PC-9 (cell line): ENCODE measurements at regions of chr10 and their contacts with region 1.

Region 1: GRCh38 chr10:73096449-73097304 is at the start of gene P4HA1:
- DNase-seq: peak; percentile 90 to 98
- H3K4me3 ChIP-seq: peak within 1 kb of the TSS; percentile 93
- H3K27ac ChIP-seq: peak within 1 kb of the TSS; percentile 65
- H3K4me1 ChIP-seq: peaks cover 18% of the 10 kb centered on the region
- H3K27me3 ChIP-seq: no peaks in the 10 kb centered on the region
- CTCF ChIP-seq: peak; percentile 68
- total RNA-seq, gene P4HA1: 21.0 and 25.5 TPM in 2 replicates

Region 2: GRCh38 chr10:72026278-72027111 is 1070.2 kb before region 1 on chr10:
- CTCF ChIA-PET with region 1: no interaction called
- POLR2A ChIA-PET with region 1: interaction called, 15 read pairs
- intact Hi-C with region 1: no loop called
- DNase-seq: peak in 1 of 2 experiments; percentile 26
- H3K4me3 ChIP-seq: no peak overlapping the region
- H3K27ac ChIP-seq: no peak overlapping the region
- H3K4me1 ChIP-seq: peaks cover 20% of the 10 kb centered on the region
- H3K27me3 ChIP-seq: no peaks in the 10 kb centered on the region
- CTCF ChIP-seq: no peak

Region 3: DNA sequence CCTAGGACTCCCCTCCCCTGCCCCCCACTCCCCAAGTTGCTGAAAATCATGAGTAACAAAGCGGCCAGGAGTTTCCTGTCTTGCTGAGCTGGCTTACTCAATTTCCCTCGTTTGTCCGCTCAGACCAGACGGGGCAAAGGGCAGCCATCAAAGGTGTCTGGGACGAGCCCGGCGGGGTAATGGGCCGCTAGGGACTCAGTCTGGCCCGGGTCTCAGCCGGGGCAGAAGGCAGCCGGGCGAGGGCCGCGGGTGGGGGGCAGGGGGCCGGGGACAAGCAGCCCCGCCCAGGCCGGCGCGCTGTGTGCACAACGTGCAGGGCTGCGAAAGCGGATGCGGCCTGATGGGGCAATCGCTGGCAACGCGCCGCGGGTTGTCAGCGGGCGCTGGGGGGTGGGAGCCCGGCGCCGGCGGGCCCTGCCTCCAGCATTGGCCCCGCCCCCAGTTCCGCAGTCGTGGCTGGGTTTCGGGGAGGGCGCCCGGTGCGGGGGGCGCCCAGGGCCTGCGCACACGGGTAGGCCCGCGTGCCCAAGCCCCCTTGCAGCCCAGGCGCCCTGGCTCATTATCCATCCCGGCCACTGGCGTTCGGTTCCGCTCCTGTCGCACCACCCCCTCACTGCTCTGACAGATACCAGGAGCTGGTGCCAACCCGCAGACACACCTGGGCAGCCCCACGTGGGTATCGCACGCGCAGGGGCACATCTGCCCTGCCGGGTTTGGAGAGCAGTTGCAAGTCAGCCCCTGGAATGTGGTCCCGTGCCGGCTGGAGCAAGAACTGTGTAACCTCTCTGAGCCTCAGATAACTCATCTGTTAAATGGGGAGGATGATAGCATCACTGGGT is 777.0 kb before region 1 on chr10:
- CTCF ChIA-PET with region 1: no interaction called
- POLR2A ChIA-PET with region 1: interaction called, 10 read pairs
- intact Hi-C with region 1: no loop called
- DNase-seq: peak; percentile 91 to 95
- H3K4me3 ChIP-seq: peak overlapping the region; percentile 59
- H3K27ac ChIP-seq: peak overlapping the region; percentile 99
- H3K4me1 ChIP-seq: peaks cover 95% of the 10 kb centered on the region
- H3K27me3 ChIP-seq: no peaks in the 10 kb centered on the region
- CTCF ChIP-seq: no peak

Region 4: GRCh38 chr10:72503241-72503640 is 593.4 kb before region 1 on chr10:
- CTCF ChIA-PET with region 1: no interaction called
- POLR2A ChIA-PET with region 1: no interaction called
- intact Hi-C with region 1: no loop called
- DNase-seq: no peak
- H3K4me3 ChIP-seq: no peak overlapping the region
- H3K27ac ChIP-seq: no peak overlapping the region
- H3K4me1 ChIP-seq: peaks cover 7% of the 10 kb centered on the region; the same call in 1 of the 2 replicates
- H3K27me3 ChIP-seq: no peaks in the 10 kb centered on the region
- CTCF ChIP-seq: no peak

Region 5: GRCh38 chr10:72802763-72803505 is 293.7 kb before region 1 on chr10:
- CTCF ChIA-PET with region 1: no interaction called
- POLR2A ChIA-PET with region 1: interaction called, 31 read pairs
- intact Hi-C with region 1: no loop called
- DNase-seq: no peak
- H3K4me3 ChIP-seq: no peak overlapping the region
- H3K27ac ChIP-seq: peak overlapping the region; percentile 50
- H3K4me1 ChIP-seq: peaks cover 38% of the 10 kb centered on the region
- H3K27me3 ChIP-seq: no peaks in the 10 kb centered on the region
- CTCF ChIP-seq: no peak

Region 6: DNA sequence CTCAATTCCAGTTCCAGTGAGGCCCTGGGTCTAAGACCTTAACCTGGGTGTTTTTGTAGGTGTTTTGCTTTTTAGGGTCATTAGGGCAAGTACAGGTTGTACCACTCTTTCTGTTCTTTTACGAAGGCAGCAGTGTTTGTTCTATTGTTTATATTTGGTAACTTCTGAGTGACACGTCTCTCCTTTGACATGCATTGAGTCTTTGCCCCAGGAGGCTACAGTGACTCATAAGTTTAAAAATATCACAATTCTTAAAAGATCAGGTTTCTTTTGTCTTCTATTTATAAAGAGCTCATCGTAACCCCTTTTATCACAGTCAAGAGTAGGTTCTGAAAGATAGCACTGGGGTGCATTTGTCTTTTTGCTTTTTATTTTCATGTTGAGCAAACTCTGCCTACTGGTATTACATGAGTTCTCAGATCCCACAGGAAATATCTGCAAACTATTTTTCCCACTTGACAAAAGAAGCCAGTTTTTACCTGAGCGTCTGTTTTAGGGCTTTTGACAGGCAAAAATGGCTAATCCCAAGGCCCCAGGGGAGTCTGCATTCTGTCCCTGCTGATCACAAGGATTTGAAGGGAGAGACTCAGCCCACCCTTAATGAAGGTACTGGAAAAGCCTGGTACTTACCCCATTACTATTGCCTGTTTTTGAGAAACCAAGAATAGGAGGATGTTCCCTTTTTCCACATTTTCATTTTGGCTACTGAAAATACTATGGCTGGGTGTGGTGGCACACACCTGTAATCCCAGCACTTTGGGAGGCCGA is 21.5 kb after region 1 on chr10:
- CTCF ChIA-PET with region 1: interaction called, 14 read pairs
- POLR2A ChIA-PET with region 1: interaction called, 5 read pairs
- intact Hi-C with region 1: no loop called
- DNase-seq: peak; percentile 19 to 94
- H3K4me3 ChIP-seq: peak overlapping the region; percentile 29; the same call in 1 of the 2 replicates
- H3K27ac ChIP-seq: peak overlapping the region; percentile 67
- H3K4me1 ChIP-seq: peaks cover 33% of the 10 kb centered on the region
- H3K27me3 ChIP-seq: no peaks in the 10 kb centered on the region
- CTCF ChIP-seq: no peak

Region 7: DNA sequence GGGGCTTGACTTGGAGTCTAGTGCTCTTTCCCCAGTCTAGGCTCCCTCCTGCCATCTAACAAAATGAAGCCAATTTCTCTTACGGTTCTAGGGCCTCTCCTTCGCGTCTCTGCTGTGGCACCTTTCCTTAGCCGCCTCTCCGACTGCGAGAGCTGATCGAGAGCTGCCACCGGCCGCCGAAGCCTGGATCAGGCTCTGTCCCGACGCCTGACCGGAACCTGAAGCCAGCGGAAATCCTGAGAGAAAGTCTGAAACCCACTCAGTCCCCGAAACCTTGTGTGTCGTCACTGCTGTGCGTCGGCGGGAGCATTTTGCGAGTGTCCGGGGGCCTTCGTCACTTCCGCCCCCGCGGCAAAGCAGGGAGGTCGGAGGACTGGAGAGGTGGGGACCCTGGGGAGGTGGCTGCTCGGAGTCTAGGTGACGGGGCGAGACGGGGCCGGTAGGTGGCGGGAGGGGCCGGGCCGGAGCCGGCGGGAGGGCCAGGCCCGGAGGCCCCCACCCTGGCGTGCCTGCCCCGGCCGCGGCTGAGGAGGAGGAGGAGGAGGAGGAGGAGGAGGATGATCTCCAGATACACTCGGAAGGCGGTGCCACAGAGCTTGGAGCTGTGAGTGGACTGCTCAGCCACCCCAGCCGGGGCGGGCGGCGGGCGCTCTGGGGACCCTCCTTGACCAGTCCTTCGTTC is 71.2 kb after region 1 on chr10 and contains the starts of genes ECD and FAM149B1:
- CTCF ChIA-PET with region 1: interaction called, 5 read pairs
- POLR2A ChIA-PET with region 1: interaction called, 11 read pairs
- intact Hi-C with region 1: no loop called
- DNase-seq: peak; percentile 92 to 96
- H3K4me3 ChIP-seq: peak within 1 kb of the TSS; percentile 83
- H3K27ac ChIP-seq: peak within 1 kb of the TSS; percentile 85
- H3K4me1 ChIP-seq: peaks cover 24% of the 10 kb centered on the region
- H3K27me3 ChIP-seq: no peaks in the 10 kb centered on the region
- CTCF ChIP-seq: peak; percentile 36; the same call in 1 of the 2 replicates
- total RNA-seq, gene ECD: 29.3 and 33.2 TPM in 2 replicates
- total RNA-seq, gene FAM149B1: 22.9 and 24.4 TPM in 2 replicates